Naive thymus-derived CD4-positive, alpha-beta T cell (primary cell): ENCODE measurements at regions of chr19 and their contacts with region 1.

Region 1: GRCh38 chr19:57578487-57579205 is at the start of gene ZNF416:
- DNase-seq: peak; percentile 76 to 98 (median 96)
- ATAC-seq: peak; percentile 99
- H3K4me3 ChIP-seq: peak within 1 kb of the TSS; percentile 73
- H3K4me3 Mint-ChIP-seq: peak within 1 kb of the TSS; percentile 75 to 91 (median 85)
- H3K27ac ChIP-seq: peak within 1 kb of the TSS; percentile 80
- H3K27ac Mint-ChIP-seq: peak within 1 kb of the TSS; percentile 78 to 91 (median 87)
- H3K4me1 ChIP-seq: peaks cover 16 to 20% of the 10 kb centered on the region in 2 donors
- H3K4me1 Mint-ChIP-seq: peaks cover 13 to 35% (median 26%) of the 10 kb centered on the region in 7 donors
- H3K27me3 ChIP-seq: no peaks in the 10 kb centered on the region
- H3K27me3 Mint-ChIP-seq: no peaks in the 10 kb centered on the region
- total RNA-seq, gene ZNF416: 4.4 to 13.8 (median 5.7) TPM

Region 2: DNA sequence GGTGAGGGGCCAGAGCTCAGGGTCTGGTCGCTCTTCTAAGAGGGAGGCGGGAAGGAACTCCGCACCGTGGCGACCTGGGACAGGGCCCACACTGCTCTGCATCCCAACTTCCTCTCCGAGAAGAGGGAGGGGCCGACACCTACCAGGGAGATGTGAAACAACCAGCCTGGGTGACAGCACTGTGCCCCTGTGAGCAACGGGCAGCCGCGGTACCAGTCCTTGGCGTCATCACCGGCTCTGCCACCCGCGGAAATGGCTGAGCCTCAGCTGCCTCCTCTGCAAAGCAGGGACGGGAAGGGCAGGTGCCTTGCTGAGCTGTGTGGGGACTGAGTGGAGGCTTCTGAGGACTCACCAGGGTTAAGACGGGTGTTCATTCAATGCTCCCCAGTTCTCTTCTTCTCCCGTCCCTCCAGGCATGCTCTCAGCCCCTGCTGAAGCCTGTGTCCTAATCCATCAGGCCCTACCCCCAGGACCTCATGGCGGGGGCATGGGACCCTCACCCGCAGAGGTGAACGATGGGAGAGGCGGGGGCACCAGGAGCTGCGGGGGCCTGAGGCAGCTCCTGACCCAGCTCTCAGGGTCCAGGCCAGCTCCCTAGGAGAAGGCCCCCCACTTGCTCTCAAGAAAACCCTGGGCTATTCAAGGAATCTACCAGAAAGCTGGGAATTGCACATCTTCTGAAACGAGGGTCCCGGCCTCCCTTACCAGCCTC is 1466.9 kb before region 1 on chr19:
- CTCF ChIA-PET with region 1: no interaction called
- POLR2A ChIA-PET with region 1: no interaction called
- intact Hi-C with region 1: no loop called
- DNase-seq: peak in 8 of 9 donors; percentile 42 to 63 (median 47)
- ATAC-seq: peak; percentile 94
- H3K4me3 ChIP-seq: no peak overlapping the region
- H3K4me3 Mint-ChIP-seq: peak overlapping the region in 7 of 10 donors; percentile 13 to 67 (median 42)
- H3K27ac ChIP-seq: peak overlapping the region; percentile 52
- H3K27ac Mint-ChIP-seq: peak overlapping the region in 8 of 9 donors; percentile 19 to 85 (median 76)
- H3K4me1 ChIP-seq: peaks cover 0 to 20% of the 10 kb centered on the region in 2 donors
- H3K4me1 Mint-ChIP-seq: peaks cover 44 to 75% (median 63%) of the 10 kb centered on the region in 7 donors
- H3K27me3 ChIP-seq: no peaks in the 10 kb centered on the region
- H3K27me3 Mint-ChIP-seq: no peaks in the 10 kb centered on the region

Region 3: GRCh38 chr19:57389730-57390598 is 188.7 kb before region 1 on chr19 and contains the start of gene ZNF548:
- CTCF ChIA-PET with region 1: no interaction called
- POLR2A ChIA-PET with region 1: no interaction called
- intact Hi-C with region 1: loop called in 1 of 2 experiments (anchors 1 kb)
- DNase-seq: peak; percentile 85 to 99 (median 92)
- ATAC-seq: peak; percentile 98
- H3K4me3 ChIP-seq: peak within 1 kb of the TSS; percentile 72
- H3K4me3 Mint-ChIP-seq: peak within 1 kb of the TSS; percentile 89 to 100 (median 97)
- H3K27ac ChIP-seq: peak within 1 kb of the TSS; percentile 93
- H3K27ac Mint-ChIP-seq: peak within 1 kb of the TSS; percentile 91 to 100 (median 97)
- H3K4me1 ChIP-seq: peaks cover 13 to 15% of the 10 kb centered on the region in 2 donors
- H3K4me1 Mint-ChIP-seq: peaks cover 11 to 45% (median 29%) of the 10 kb centered on the region in 7 donors
- H3K27me3 ChIP-seq: no peaks in the 10 kb centered on the region
- H3K27me3 Mint-ChIP-seq: no peaks in the 10 kb centered on the region
- total RNA-seq, gene ZNF548: 26.4 to 115 (median 66.9) TPM

Region 4: DNA sequence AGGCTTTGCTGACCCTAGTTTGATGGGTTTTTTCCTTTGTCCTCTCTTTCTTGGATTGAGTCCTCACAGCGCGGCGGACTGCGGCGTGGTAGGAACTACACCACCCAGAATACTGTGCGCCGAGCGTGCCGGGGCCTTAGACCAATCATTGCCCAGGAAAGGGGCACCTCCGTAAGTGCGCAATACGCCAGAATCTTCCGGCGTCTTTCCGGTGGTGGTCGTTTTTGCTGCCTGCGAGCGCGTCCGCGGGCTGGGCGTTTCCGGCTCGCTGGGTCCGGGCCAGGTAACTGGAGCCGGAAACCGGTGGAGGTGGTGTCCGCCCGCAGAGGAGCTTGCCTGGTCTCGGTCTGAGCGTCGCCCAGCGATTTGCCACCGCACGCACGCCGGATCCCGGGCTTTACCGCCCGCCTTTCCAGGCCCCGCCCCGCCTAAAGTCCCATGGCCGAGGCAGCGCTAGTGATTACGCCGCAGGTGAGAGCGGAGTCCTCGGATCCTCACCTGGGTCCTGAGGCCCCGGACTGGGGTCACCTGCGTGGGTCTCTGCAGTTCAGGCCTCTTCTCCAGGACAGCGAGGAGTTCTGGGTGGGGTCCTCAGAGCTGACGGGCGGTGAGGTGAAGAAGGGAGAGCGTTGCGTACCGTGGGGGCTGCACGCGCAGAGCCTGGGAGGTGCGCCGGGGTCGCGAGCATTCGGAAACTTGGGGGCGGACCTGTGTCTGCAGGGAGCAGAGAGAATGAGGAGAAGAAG is 51.3 kb before region 1 on chr19 and contains the start of gene ZNF549:
- CTCF ChIA-PET with region 1: no interaction called
- POLR2A ChIA-PET with region 1: no interaction called
- intact Hi-C with region 1: loop called (anchors 1 kb)
- DNase-seq: peak; percentile 65 to 90 (median 88)
- ATAC-seq: peak; percentile 99
- H3K4me3 ChIP-seq: peak within 1 kb of the TSS; percentile 98
- H3K4me3 Mint-ChIP-seq: peak within 1 kb of the TSS; percentile 89 to 98 (median 96)
- H3K27ac ChIP-seq: peak within 1 kb of the TSS; percentile 94
- H3K27ac Mint-ChIP-seq: peak within 1 kb of the TSS; percentile 80 to 98 (median 95)
- H3K4me1 ChIP-seq: peaks cover 14 to 18% of the 10 kb centered on the region in 2 donors
- H3K4me1 Mint-ChIP-seq: peaks cover 15 to 36% (median 32%) of the 10 kb centered on the region in 7 donors
- H3K27me3 ChIP-seq: no peaks in the 10 kb centered on the region
- H3K27me3 Mint-ChIP-seq: peaks cover 0 to 4% (median 0%) of the 10 kb centered on the region in 5 donors
- total RNA-seq, gene ZNF549: 6.9 to 24.8 (median 11.3) TPM

Region 5: DNA sequence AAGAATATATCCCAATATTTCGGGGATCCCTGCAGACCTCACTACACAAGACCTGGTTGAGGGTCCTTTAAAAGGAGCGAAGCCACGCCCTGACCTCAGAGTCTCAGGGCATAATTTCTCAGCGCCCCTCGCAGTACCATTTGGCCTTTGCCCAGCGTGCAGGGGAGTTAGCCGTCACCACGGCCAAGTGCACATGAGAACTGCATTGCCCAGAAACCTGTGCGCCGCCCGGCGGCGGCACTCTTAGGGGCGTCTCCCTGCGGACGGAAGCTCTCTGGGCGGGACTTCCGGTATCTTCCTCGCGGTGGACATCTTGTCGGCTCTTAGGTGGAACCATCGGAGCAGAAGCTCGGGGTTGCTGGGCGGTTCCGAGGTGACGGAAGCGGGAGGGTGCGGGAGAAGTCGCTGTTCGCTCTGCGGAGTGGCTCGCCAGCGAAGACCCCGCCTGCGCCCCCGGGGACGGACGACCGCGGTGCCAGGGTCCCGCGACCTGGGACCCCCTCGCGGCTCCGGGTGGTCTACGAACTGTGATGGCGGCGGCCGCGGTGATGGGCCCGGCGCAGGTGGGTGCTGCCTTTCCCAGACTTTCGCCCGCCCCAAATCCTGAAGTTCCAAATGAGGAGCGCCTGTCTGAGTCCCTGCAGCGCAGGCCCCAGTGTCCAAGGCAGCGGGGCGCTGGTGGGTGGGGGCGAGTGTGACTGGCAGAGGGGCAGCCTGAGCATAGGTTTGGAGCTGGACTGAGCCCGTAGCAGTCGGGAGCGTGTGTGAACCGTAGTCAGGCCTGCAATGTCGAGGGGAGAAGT is 35.5 kb after region 1 on chr19 and contains the start of gene ZNF134:
- CTCF ChIA-PET with region 1: no interaction called
- POLR2A ChIA-PET with region 1: interaction called, 6 read pairs
- intact Hi-C with region 1: loop called (anchors 1 kb)
- DNase-seq: peak; percentile 74 to 90 (median 84)
- ATAC-seq: peak; percentile 100
- H3K4me3 ChIP-seq: peak within 1 kb of the TSS; percentile 94
- H3K4me3 Mint-ChIP-seq: peak within 1 kb of the TSS; percentile 79 to 95 (median 90)
- H3K27ac ChIP-seq: peak within 1 kb of the TSS; percentile 76
- H3K27ac Mint-ChIP-seq: peak within 1 kb of the TSS; percentile 78 to 92 (median 86)
- H3K4me1 ChIP-seq: peaks cover 14 to 15% of the 10 kb centered on the region in 2 donors
- H3K4me1 Mint-ChIP-seq: peaks cover 18 to 43% (median 34%) of the 10 kb centered on the region in 7 donors
- H3K27me3 ChIP-seq: no peaks in the 10 kb centered on the region
- H3K27me3 Mint-ChIP-seq: no peaks in the 10 kb centered on the region
- total RNA-seq, gene ZNF134: 14.6 to 33.9 (median 25.7) TPM

Region 6: DNA sequence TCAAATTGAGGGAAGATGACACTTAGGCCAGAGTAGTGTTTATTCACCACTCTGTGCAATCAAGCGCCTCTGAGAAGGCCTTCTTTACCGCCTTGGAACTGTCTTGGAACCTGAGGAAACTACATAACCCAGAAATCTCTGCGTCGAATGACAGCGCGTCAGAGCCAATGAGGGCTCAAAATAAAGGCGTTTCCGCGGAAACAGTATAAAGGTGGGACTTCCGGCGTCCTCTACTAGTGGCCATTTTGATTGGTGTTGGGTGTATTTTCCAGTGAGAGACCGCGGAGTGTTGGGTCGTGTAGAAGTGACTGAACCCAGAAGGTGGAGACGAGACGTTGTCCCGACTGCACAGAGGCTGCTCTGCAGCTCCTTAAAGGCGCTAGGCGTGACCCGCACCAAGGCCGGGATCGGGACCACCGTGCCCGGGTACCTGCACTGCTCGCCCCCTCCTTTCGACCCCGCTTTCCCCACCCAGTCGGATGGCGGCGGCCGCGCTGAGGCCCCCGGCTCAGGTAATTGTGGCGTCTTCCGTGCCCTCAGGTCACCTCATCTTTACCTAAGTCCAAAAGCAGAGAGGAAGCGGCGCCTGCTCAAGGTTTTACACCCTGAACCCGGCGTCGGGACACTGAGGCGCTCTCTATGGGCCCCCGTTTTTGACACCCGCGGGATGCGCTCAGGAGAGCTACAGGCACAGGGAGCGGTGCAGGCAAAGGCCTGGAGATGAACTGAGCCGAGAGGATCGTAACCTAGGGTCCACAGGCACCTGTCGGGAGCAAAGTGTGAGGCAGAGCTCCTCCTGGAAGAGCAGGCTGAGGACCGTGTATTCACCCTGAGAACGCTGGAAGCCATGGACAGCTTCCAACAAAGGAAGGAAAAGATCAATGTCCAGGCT is 168.2 kb after region 1 on chr19 and contains the start of gene ZNF776:
- CTCF ChIA-PET with region 1: no interaction called
- POLR2A ChIA-PET with region 1: no interaction called
- intact Hi-C with region 1: loop called (anchors 1 to 5 kb)
- DNase-seq: peak; percentile 40 to 90 (median 84)
- ATAC-seq: peak; percentile 99
- H3K4me3 ChIP-seq: peak within 1 kb of the TSS; percentile 86
- H3K4me3 Mint-ChIP-seq: peak within 1 kb of the TSS; percentile 91 to 99 (median 94)
- H3K27ac ChIP-seq: peak within 1 kb of the TSS; percentile 85
- H3K27ac Mint-ChIP-seq: peak within 1 kb of the TSS; percentile 81 to 99 (median 94)
- H3K4me1 ChIP-seq: peaks cover 6 to 16% of the 10 kb centered on the region in 2 donors
- H3K4me1 Mint-ChIP-seq: peaks cover 13 to 40% (median 26%) of the 10 kb centered on the region in 7 donors
- H3K27me3 ChIP-seq: no peaks in the 10 kb centered on the region
- H3K27me3 Mint-ChIP-seq: no peaks in the 10 kb centered on the region
- total RNA-seq, gene ZNF776: 18.9 to 52.3 (median 21.8) TPM

Region 7: DNA sequence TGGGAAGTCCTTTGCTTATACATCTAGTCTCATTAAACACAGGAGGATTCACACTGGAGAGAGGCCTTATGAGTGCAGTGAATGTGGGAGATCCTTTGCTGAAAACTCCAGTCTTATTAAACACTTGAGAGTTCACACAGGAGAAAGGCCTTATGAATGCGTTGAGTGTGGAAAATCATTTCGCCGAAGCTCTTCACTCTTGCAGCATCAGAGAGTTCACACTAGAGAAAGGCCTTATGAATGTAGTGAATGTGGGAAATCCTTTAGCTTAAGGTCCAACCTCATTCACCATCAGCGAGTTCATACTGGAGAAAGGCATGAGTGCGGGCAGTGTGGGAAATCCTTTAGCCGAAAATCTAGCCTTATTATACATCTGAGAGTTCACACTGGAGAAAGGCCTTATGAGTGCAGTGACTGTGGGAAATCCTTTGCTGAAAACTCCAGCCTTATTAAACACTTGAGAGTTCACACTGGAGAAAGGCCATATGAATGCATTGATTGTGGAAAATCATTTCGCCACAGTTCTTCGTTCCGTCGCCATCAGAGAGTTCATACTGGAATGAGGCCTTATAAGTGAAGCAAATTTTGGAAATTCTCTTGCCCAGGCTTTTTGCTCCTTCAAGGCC is 200.7 kb after region 1 on chr19:
- CTCF ChIA-PET with region 1: no interaction called
- POLR2A ChIA-PET with region 1: no interaction called
- intact Hi-C with region 1: no loop called
- DNase-seq: no peak
- ATAC-seq: no peak
- H3K4me3 ChIP-seq: peak overlapping the region; percentile 38
- H3K4me3 Mint-ChIP-seq: peak overlapping the region in 1 of 10 donors; percentile 45
- H3K27ac ChIP-seq: no peak overlapping the region
- H3K27ac Mint-ChIP-seq: peak overlapping the region in 1 of 9 donors; percentile 17
- H3K4me1 ChIP-seq: no peaks in the 10 kb centered on the region
- H3K4me1 Mint-ChIP-seq: peaks cover 0 to 13% (median 3%) of the 10 kb centered on the region in 7 donors
- H3K27me3 ChIP-seq: no peaks in the 10 kb centered on the region
- H3K27me3 Mint-ChIP-seq: no peaks in the 10 kb centered on the region

Region 8: DNA sequence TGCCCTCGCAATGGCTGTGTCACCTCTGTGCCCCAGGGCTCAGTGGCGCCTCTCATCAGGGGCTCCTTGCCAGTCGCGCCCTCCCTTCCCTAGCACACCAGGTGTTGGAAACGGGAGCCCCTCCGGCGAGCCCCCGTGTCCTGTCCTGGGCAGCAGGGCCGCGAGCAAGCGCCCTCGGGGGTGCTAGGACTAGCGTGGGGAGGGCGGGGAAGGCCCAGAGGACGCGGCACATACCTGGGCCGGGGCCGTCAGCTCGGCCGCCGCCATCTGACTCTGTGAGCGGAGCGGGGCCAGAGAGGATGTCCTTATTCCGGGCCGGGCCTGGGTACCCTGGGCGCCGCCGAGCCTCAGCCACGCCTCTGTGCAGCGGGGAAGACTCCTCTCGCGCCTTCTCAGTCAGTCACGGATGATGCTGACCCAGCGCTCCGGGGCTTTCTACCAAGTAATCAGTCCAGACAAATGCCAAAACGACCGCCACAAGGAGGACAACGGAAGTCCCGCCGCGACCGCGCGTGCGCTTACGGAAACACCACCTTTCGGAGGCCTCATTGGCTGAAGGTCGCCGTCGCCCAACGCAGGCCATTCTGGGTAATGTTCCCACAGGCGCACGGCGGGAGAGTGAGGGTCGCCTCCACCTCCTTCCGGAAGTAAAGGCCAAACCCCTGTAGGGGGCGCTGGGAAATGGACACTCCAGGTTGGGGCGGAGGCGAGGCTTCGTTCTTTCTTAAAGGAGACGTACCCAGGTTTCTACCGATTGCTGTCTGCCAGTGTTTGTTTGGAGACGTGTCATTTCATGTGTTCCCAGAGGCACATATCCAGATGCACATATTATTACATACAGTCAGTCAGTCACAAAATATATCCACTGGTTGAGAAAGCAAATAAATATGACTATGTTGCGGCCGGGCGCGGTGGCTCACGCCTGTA is 368.8 kb after region 1 on chr19 and contains the start of gene ZNF256:
- CTCF ChIA-PET with region 1: no interaction called
- POLR2A ChIA-PET with region 1: interaction called, 3 read pairs
- intact Hi-C with region 1: loop called in 1 of 2 experiments (anchors 1 kb)
- DNase-seq: peak; percentile 55 to 85 (median 77)
- ATAC-seq: peak; percentile 97
- H3K4me3 ChIP-seq: peak within 1 kb of the TSS; percentile 71
- H3K4me3 Mint-ChIP-seq: peak within 1 kb of the TSS; percentile 89 to 97 (median 95)
- H3K27ac ChIP-seq: peak within 1 kb of the TSS; percentile 80
- H3K27ac Mint-ChIP-seq: peak within 1 kb of the TSS; percentile 83 to 97 (median 92)
- H3K4me1 ChIP-seq: peaks cover 6 to 9% of the 10 kb centered on the region in 2 donors
- H3K4me1 Mint-ChIP-seq: peaks cover 10 to 28% (median 21%) of the 10 kb centered on the region in 7 donors
- H3K27me3 ChIP-seq: no peaks in the 10 kb centered on the region
- H3K27me3 Mint-ChIP-seq: peaks cover 0 to 4% (median 0%) of the 10 kb centered on the region in 5 donors
- total RNA-seq, gene ZNF256: 5.2 to 13.8 (median 11.8) TPM